GM10248 (cell line): ENCODE measurements at regions of chr16 and their contacts with region 1.

Region 1: GRCh38 chr16:57648590-57649442 is 19.3 kb upstream of the ADGRG3 start:
- DNase-seq: peak; percentile 92
- CTCF ChIP-seq: peak; percentile 100

Region 2: GRCh38 chr16:57403965-57404817 is 244.6 kb before region 1 on chr16 and contains the start of gene CCL17:
- CTCF ChIA-PET with region 1: no interaction called
- POLR2A ChIA-PET with region 1: no interaction called
- DNase-seq: no peak
- CTCF ChIP-seq: no peak

Region 3: GRCh38 chr16:57530104-57530521 is 118.7 kb before region 1 on chr16:
- CTCF ChIA-PET with region 1: no interaction called
- POLR2A ChIA-PET with region 1: no interaction called
- DNase-seq: peak; percentile 77
- CTCF ChIP-seq: no peak

Region 4: DNA sequence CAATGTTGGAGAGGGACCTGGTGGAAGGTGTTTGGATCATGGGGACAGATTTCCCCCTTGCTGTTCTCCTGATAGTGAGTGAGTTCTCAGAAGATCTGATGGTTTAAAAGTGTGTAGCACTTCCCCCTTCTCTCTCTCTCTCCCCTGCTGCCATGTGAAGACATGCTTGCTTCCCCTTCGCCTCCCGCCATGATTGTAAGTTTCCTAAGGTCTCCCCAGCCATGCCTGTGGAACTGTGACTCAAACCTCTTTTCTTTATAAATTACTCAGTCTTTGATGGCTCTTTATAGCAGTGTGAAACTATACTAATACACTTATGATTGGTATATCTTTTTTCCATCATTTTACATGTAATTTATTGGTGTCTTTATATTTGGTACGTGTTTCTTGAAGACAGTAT is 93.0 kb before region 1 on chr16:
- CTCF ChIA-PET with region 1: interaction called, 13 read pairs
- POLR2A ChIA-PET with region 1: no interaction called
- DNase-seq: no peak
- CTCF ChIP-seq: no peak

Region 5: GRCh38 chr16:57600048-57600835 is 48.6 kb before region 1 on chr16:
- CTCF ChIA-PET with region 1: interaction called, 116 read pairs
- POLR2A ChIA-PET with region 1: no interaction called
- DNase-seq: peak; percentile 71
- CTCF ChIP-seq: peak; percentile 84

Region 6: GRCh38 chr16:57618306-57619127 is 30.3 kb before region 1 on chr16:
- CTCF ChIA-PET with region 1: interaction called, 32 read pairs
- POLR2A ChIA-PET with region 1: no interaction called
- DNase-seq: no peak
- CTCF ChIP-seq: no peak

Region 7: DNA sequence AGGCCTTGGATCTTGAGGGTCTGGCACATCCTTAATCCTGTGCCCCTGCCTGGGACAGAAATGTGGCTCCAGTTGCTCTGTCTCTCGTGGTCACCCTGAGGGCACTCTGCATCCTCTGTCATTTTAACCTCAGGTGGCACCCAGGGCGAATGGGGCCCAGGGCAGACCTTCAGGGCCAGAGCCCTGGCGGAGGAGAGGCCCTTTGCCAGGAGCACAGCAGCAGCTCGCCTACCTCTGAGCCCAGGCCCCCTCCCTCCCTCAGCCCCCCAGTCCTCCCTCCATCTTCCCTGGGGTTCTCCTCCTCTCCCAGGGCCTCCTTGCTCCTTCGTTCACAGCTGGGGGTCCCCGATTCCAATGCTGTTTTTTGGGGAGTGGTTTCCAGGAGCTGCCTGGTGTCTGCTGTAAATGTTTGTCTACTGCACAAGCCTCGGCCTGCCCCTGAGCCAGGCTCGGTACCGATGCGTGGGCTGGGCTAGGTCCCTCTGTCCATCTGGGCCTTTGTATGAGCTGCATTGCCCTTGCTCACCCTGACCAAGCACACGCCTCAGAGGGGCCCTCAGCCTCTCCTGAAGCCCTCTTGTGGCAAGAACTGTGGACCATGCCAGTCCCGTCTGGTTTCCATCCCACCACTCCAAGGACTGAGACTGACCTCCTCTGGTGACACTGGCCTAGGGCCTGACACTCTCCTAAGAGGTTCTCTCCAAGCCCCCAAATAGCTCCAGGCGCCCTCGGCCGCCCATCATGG is 15.3 kb after region 1 on chr16:
- CTCF ChIA-PET with region 1: interaction called, 26 read pairs
- POLR2A ChIA-PET with region 1: no interaction called
- DNase-seq: no peak
- CTCF ChIP-seq: no peak